ENCODE measurements at regions of chr5 and their contacts with region 1.

Region 1: GRCh38 chr5:87008751-87009560 is 258.7 kb upstream of the RASA1 start:
- DNase-seq: no peak
- H3K4me3 Mint-ChIP-seq: no peak overlapping the region
- H3K27ac Mint-ChIP-seq: no peak overlapping the region
- H3K4me1 Mint-ChIP-seq: no peaks in the 10 kb centered on the region
- H3K27me3 Mint-ChIP-seq: peaks cover 18% of the 10 kb centered on the region

Region 2: GRCh38 chr5:86880785-86881492 is 128.0 kb before region 1 on chr5:
- intact Hi-C with region 1: loop called (anchors 2 kb)
- DNase-seq: peak; percentile 18
- H3K4me3 Mint-ChIP-seq: no peak overlapping the region
- H3K27ac Mint-ChIP-seq: no peak overlapping the region
- H3K4me1 Mint-ChIP-seq: no peaks in the 10 kb centered on the region
- H3K27me3 Mint-ChIP-seq: no peaks in the 10 kb centered on the region

Region 3: DNA sequence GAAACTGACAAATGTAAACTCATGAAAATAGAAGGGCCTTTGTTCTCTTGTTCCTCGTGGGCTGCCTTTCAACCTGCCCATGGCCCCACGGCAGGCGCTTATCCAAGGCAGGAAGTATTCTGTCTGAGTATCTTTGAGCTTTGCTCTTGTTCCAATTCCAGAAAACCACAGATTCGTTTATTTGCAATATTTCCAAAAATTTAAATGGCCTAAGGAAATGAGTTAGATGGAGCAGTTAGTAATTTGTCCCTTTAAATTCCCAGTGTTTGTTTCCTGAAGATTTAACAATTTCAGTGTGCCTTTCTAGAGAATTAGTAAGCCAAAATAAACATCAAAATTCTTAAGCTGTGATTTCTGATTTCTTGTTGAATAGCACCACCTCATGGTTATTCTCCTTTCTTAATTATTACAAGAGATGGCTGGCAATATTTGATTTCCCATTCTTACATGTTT is 40.6 kb before region 1 on chr5:
- intact Hi-C with region 1: loop called (anchors 5 kb)
- DNase-seq: no peak
- H3K4me3 Mint-ChIP-seq: no peak overlapping the region
- H3K27ac Mint-ChIP-seq: no peak overlapping the region
- H3K4me1 Mint-ChIP-seq: peaks cover 4% of the 10 kb centered on the region
- H3K27me3 Mint-ChIP-seq: peaks cover 36% of the 10 kb centered on the region

Region 4: DNA sequence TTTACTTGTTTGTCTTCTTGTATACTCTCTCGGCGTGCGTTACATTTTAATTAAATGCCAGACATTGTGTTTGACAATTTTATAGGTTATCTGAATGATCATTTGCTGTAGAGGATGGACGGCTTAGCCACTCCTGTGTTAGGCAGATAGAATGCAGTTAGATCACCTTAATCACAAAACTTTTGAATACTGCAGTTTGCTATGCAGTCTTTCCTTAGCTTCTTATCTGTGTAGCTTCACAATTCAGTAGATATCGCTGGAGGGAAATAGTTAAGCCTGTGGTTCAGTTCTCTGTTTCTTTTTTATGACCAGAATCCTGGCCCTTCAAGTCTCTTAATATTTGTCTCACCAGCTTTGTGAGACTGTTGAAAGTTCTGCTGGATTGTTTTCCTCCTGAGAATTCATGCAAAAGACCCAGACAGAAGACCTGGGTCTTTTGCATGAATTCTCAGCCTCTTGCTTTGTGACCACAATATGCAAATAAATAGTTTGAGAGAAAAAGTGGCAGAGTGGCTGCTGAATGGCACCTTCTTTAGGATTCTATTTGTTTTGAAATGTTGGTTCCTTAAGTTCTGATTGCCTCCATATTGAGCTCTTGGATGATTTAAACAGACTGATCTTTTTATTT is 299.0 kb after region 1 on chr5:
- intact Hi-C with region 1: no loop called
- DNase-seq: no peak
- H3K4me3 Mint-ChIP-seq: no peak overlapping the region
- H3K27ac Mint-ChIP-seq: no peak overlapping the region
- H3K4me1 Mint-ChIP-seq: peaks cover 19% of the 10 kb centered on the region
- H3K27me3 Mint-ChIP-seq: no peaks in the 10 kb centered on the region

Measured in activated T-helper 2 cell treated with anti-CD3 and anti-CD28 coated beads, Interferon-gamma antibody, Interleukin-2, Interleukin-4, amounts not matched to agents 10 μg/mL and 5 μg/mL and 100 μg/mL, durations not matched to agents 14 hours and 24 hours and 36 hours (primary cell).